ENCODE measurements at regions of chr6 and their contacts with region 1.

Region 1: DNA sequence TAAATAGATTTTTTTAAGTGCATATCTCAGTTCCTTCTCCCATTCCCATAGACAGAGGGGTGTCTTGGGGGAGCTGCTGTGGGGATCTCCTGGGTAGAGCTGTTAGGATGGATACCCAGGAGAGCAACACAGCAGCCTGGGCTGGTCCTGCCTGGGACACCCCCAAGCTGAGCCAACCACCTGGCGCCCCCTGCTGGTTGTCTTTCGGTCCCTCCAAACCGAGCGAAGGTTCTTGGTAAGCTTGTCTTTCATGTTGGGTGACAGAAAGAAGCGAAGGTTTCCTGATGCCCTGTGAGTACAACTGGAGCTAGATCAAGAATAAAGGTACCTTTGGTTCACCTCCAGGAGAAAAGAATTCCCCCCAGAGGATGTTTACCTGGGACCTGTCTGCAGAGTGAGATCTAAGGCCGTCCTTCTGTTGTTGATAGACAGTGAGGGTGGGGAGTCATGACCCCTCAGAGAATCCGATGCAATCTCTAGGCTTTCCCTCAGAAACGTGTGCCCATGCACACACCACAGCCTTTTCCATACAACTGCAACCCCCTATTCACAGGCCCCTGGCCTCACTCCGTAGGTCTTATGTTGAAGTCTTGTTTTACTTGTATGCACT is 50.8 kb downstream of the SNX9 start:
- DNase-seq: peak; percentile 91
- ATAC-seq: peak; percentile 89
- H3K4me3 Mint-ChIP-seq: no peak overlapping the region
- H3K27ac Mint-ChIP-seq: no peak overlapping the region
- H3K4me1 Mint-ChIP-seq: peaks cover 15% of the 10 kb centered on the region
- H3K27me3 Mint-ChIP-seq: no peaks in the 10 kb centered on the region

Region 2: DNA sequence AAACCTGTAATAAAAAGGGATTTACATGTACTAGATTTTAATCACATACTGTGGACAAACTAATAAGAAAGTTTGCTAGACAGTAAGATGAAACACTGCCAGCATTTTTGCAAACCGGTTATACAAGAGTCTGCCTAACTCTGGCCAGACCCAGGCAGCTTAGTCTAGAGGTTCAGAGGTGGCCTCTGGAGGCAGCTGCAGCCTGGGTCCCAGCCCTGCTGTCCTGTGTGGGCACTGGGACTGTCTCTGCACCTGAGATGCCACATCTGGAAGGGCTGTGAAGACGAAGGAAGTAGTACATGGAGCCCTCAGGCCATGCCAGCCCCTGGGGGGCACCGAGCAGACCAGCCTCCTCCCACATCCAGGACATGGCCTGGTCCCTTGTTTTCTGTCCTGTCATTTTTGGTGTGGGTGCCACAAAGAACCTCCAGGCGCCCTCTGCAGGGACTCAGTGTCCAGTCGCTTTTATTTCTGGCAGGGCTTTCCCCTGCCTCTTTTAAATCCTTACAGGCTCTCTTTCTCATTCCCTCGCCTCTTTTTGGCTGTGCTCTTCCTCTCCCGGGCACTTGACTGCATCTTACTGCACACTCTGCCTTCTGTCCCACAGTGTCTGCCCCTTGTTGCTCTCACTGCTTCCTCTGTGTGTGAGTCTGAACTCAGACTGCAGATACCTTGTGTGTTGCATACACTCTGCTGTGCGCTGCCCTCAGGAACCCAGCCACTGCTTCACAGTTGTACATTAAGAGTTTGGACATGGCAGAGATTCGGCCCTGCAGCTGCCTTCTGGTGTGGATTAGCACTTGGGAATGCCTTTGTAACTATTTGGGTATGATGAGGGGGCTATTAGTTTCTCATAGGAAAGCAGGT is 276.2 kb before region 1 on chr6:
- CTCF ChIA-PET with region 1: no interaction called
- POLR2A ChIA-PET with region 1: no interaction called
- DNase-seq: peak; percentile 62
- ATAC-seq: peak; percentile 66
- H3K4me3 Mint-ChIP-seq: no peak overlapping the region
- H3K27ac Mint-ChIP-seq: peak overlapping the region; percentile 71
- H3K4me1 Mint-ChIP-seq: peaks cover 22% of the 10 kb centered on the region
- H3K27me3 Mint-ChIP-seq: no peaks in the 10 kb centered on the region

Region 3: GRCh38 chr6:157756708-157757429 is 117.0 kb before region 1 on chr6:
- CTCF ChIA-PET with region 1: interaction called, 79 read pairs
- POLR2A ChIA-PET with region 1: no interaction called
- DNase-seq: peak; percentile 88
- ATAC-seq: peak; percentile 38
- H3K4me3 Mint-ChIP-seq: no peak overlapping the region
- H3K27ac Mint-ChIP-seq: no peak overlapping the region
- H3K4me1 Mint-ChIP-seq: peaks cover 53% of the 10 kb centered on the region
- H3K27me3 Mint-ChIP-seq: peaks cover 14% of the 10 kb centered on the region

Region 4: DNA sequence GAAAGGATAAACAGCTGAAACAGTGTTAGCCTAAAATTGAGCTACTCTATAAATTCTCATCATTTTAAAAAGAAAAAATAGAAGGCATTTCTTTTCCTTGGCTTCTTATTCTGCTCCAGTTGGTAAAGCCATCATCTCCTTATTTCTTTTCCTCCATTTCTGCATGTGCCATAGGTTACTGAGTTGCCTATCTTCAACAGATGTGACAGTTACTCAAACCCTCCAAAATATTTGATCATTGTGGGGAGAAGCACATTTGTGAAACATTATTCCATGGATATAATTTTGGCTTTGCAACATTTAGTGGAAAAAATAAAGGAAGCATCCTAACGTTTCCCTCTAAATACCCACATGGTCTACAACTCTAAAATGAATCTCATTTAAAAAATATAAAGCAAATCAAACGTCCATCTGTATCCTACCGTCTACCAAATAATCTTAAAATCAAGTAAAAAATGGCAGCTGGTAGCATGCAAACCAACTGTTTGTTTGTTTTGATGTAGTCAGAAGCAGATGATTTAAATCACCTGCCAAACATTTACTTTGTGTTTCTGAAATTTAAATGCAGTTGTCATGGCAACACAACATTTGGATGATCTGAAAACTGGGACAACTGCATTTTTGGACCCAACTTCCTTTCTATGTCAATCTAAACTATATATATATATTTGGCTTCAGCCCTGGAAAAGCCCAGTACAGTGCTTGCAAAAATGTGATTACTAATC is 67.5 kb before region 1 on chr6:
- CTCF ChIA-PET with region 1: interaction called, 11 read pairs
- POLR2A ChIA-PET with region 1: no interaction called
- DNase-seq: no peak
- ATAC-seq: no peak
- H3K4me3 Mint-ChIP-seq: no peak overlapping the region
- H3K27ac Mint-ChIP-seq: no peak overlapping the region
- H3K4me1 Mint-ChIP-seq: peaks cover 2% of the 10 kb centered on the region
- H3K27me3 Mint-ChIP-seq: peaks cover 10% of the 10 kb centered on the region

Region 5: DNA sequence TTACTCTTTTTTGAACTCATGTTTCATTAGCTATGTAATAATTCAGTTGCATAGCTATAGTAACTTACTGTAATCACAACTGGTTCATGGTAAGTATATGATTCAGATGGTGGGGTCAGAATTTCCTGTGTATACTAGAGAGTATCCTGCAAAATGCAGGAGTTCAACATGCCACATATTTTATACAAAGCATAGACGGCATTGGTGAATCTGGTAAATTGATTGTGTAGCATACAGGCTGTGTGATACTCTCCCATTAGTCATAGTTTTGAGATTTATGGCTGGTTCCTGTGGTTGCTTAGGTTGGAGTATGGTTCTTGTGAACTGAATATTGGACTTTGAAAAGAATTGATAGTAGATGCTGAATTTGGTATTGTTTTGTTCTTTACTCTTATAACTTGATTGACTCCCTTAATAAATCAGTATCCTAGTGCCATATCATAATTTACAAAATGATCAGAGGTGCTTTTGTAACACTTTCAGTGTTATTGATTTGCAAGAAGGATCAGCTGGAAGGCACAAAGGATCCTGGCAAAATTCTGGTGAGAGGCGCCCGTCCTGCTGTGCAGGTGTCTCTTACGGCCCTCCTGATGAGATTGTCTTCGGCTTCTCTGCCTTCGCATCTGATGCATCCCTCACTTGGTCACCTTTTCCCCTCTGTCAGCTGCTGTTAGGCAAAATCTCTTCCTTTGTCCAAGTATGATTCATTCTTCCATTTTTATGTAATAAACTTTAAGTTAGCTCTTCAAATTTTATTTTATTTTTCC is 28.2 kb before region 1 on chr6:
- CTCF ChIA-PET with region 1: interaction called, 11 read pairs
- POLR2A ChIA-PET with region 1: no interaction called
- DNase-seq: peak; percentile 10
- ATAC-seq: no peak
- H3K4me3 Mint-ChIP-seq: no peak overlapping the region
- H3K27ac Mint-ChIP-seq: no peak overlapping the region
- H3K4me1 Mint-ChIP-seq: peaks cover 34% of the 10 kb centered on the region
- H3K27me3 Mint-ChIP-seq: no peaks in the 10 kb centered on the region

Region 6: GRCh38 chr6:157898169-157898568 is 24.3 kb after region 1 on chr6:
- CTCF ChIA-PET with region 1: interaction called, 11 read pairs
- POLR2A ChIA-PET with region 1: no interaction called
- DNase-seq: no peak
- ATAC-seq: peak; percentile 51
- H3K4me3 Mint-ChIP-seq: no peak overlapping the region
- H3K27ac Mint-ChIP-seq: peak overlapping the region; percentile 35
- H3K4me1 Mint-ChIP-seq: peaks cover 21% of the 10 kb centered on the region
- H3K27me3 Mint-ChIP-seq: no peaks in the 10 kb centered on the region